Dendritic cell treated with granulocyte-macrophage colony-stimulating factor and Interleukin-4, amounts not matched to agents 40 ng/mL and 50 ng/mL, for 4 days (primary cell): ENCODE measurements at regions of chr18 and their contacts with region 1.

Region 1: GRCh38 chr18:7566567-7567473 is at the start of gene PTPRM:
- H3K4me3 Mint-ChIP-seq: peak within 1 kb of the TSS; percentile 85
- H3K27ac Mint-ChIP-seq: peak within 1 kb of the TSS; percentile 62
- H3K4me1 Mint-ChIP-seq: peaks cover 17% of the 10 kb centered on the region
- H3K27me3 Mint-ChIP-seq: peaks cover 50% of the 10 kb centered on the region

Region 2: GRCh38 chr18:7221424-7222155 is 345.2 kb before region 1 on chr18:
- intact Hi-C with region 1: loop called (anchors 5 kb)
- H3K4me3 Mint-ChIP-seq: no peak overlapping the region
- H3K27ac Mint-ChIP-seq: no peak overlapping the region
- H3K4me1 Mint-ChIP-seq: no peaks in the 10 kb centered on the region
- H3K27me3 Mint-ChIP-seq: peaks cover 2% of the 10 kb centered on the region

Region 3: GRCh38 chr18:7272311-7273049 is 294.3 kb before region 1 on chr18:
- intact Hi-C with region 1: loop called (anchors 10 kb)
- H3K4me3 Mint-ChIP-seq: peak overlapping the region; percentile 27
- H3K27ac Mint-ChIP-seq: peak overlapping the region; percentile 65
- H3K4me1 Mint-ChIP-seq: peaks cover 20% of the 10 kb centered on the region
- H3K27me3 Mint-ChIP-seq: peaks cover 2% of the 10 kb centered on the region